Heart left ventricle (tissue), 16 donors: ENCODE measurements at regions of chr5 and their contacts with region 1.

Region 1: DNA sequence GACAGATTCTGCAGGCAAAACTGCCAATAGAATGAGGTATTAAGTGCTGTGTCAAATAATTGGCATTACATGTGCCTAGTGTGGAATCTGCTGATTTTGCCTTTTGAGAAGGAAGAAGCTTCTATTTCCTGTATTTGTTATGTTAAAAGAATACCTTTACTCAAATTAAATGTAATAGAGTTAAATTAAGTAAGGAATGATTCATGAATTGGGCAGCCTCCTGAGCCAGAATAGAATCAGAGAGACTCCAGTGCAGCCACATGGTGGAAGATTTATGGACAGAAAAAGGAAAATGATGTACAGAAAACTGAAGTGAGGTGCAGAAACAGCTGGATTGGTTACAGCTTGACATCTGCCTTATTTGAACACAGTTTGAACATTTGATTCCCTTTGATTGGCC is 464.4 kb upstream of the SEMA6A start:
- DNase-seq: no peak
- ATAC-seq: no peak
- H3K4me3 ChIP-seq: no peak overlapping the region
- H3K27ac ChIP-seq: no peak overlapping the region
- H3K4me1 ChIP-seq: no peaks in the 10 kb centered on the region
- H3K27me3 ChIP-seq: no peaks in the 10 kb centered on the region
- CTCF ChIP-seq: no peak
- POLR2A ChIP-seq: no peak

Region 2: DNA sequence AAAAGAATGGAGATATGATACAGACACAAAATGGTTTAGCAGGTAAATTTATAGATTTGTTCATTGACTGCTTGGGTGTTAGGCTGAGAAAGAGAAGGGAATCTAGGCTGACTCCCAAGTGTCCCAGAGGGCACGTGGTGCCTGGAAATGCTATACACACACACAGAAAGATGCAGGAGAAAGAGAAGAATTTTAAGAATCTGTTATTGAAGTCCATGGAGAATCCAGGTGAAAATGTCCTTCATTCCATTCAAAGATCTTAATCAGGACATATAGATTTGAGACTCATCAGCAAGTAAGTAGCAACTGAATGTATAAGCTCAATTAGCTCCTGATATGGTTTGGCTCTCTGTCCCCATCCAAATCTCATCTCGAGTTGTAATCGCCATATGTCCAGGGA is 58.0 kb before region 1 on chr5:
- intact Hi-C with region 1: loop called in 1 of 10 experiments (anchors 2 kb)
- DNase-seq: no peak
- ATAC-seq: no peak
- H3K4me3 ChIP-seq: no peak overlapping the region
- H3K27ac ChIP-seq: no peak overlapping the region
- H3K4me1 ChIP-seq: no peaks in the 10 kb centered on the region
- H3K27me3 ChIP-seq: no peaks in the 10 kb centered on the region
- CTCF ChIP-seq: no peak
- POLR2A ChIP-seq: no peak

Region 3: DNA sequence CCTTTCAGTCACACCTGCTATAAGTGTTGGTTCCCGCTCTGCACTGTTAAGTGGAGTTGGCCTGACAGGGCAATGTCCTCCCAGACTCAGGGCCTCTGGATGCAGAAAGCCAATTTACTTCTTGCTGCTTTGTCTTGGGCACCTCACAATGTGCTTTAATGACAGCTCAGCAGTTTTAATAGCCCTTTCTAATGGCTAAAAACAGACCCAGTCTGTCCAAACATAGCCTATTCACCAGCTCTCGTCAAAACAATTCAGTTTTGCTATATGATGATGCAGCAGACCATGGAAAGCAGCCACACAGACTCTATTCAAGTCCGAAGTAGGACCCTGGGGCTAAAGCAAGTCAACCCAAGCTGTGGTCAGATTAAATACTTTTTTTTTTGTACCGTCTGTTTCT is 64.7 kb after region 1 on chr5:
- intact Hi-C with region 1: no loop called
- DNase-seq: no peak
- ATAC-seq: no peak
- H3K4me3 ChIP-seq: no peak overlapping the region
- H3K27ac ChIP-seq: no peak overlapping the region
- H3K4me1 ChIP-seq: no peaks in the 10 kb centered on the region
- H3K27me3 ChIP-seq: no peaks in the 10 kb centered on the region
- CTCF ChIP-seq: no peak
- POLR2A ChIP-seq: no peak